ENCODE measurements at regions of chr12 and their contacts with region 1.

Region 1: GRCh38 chr12:93569656-93570551 is 2.6 kb upstream of the SOCS2 start:
- DNase-seq: peak; percentile 89 to 94 (median 94)
- ATAC-seq: peak; percentile 86 to 92
- H3K4me3 ChIP-seq: peak overlapping the region; percentile 93
- H3K27ac ChIP-seq: peak overlapping the region; percentile 79
- H3K4me1 ChIP-seq: no peaks in the 10 kb centered on the region
- H3K27me3 ChIP-seq: no peaks in the 10 kb centered on the region

Region 2: DNA sequence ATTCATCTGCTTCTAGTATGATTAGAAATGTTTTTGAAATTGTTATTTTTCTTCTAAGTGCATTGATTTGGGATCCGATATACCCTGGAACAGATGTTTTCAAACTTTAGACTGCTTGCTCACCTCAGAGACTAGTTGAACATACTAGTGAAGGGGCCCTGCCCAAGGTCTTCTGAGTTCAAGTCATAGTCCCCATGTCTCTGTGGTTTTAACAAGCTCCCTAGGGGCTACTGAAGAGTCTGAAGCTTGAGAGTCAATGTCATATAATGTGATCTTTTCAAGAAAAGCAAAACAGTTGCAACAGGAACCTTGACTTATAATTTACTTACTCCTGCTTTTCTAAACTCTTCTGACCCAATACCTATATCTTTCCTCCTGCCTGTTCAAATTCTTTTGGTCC is 120.6 kb before region 1 on chr12:
- intact Hi-C with region 1: no loop called
- DNase-seq: no peak
- ATAC-seq: no peak
- H3K4me3 ChIP-seq: no peak overlapping the region
- H3K27ac ChIP-seq: no peak overlapping the region
- H3K4me1 ChIP-seq: no peaks in the 10 kb centered on the region
- H3K27me3 ChIP-seq: no peaks in the 10 kb centered on the region

Region 3: GRCh38 chr12:93502802-93503623 is 66.9 kb before region 1 on chr12:
- intact Hi-C with region 1: loop called in 2 of 4 experiments (anchors 5 to 10 kb)
- DNase-seq: peak in 1 of 3 donors; percentile 30
- ATAC-seq: no peak
- H3K4me3 ChIP-seq: no peak overlapping the region
- H3K27ac ChIP-seq: no peak overlapping the region
- H3K4me1 ChIP-seq: no peaks in the 10 kb centered on the region
- H3K27me3 ChIP-seq: no peaks in the 10 kb centered on the region

Region 4: GRCh38 chr12:93733358-93733757 is 163.5 kb after region 1 on chr12:
- intact Hi-C with region 1: loop called in 1 of 4 experiments (anchors 5 kb)
- DNase-seq: no peak
- ATAC-seq: peak; percentile 25 to 29
- H3K4me3 ChIP-seq: no peak overlapping the region
- H3K27ac ChIP-seq: no peak overlapping the region
- H3K4me1 ChIP-seq: peaks cover 3% of the 10 kb centered on the region
- H3K27me3 ChIP-seq: no peaks in the 10 kb centered on the region

Region 5: GRCh38 chr12:93894391-93895088 is 324.6 kb after region 1 on chr12:
- intact Hi-C with region 1: loop called in 1 of 4 experiments (anchors 10 kb)
- DNase-seq: peak; percentile 93 to 97 (median 96)
- ATAC-seq: peak; percentile 96 to 97
- H3K4me3 ChIP-seq: peak overlapping the region; percentile 6
- H3K27ac ChIP-seq: peak overlapping the region; percentile 96
- H3K4me1 ChIP-seq: peaks cover 11% of the 10 kb centered on the region
- H3K27me3 ChIP-seq: no peaks in the 10 kb centered on the region

Region 6: DNA sequence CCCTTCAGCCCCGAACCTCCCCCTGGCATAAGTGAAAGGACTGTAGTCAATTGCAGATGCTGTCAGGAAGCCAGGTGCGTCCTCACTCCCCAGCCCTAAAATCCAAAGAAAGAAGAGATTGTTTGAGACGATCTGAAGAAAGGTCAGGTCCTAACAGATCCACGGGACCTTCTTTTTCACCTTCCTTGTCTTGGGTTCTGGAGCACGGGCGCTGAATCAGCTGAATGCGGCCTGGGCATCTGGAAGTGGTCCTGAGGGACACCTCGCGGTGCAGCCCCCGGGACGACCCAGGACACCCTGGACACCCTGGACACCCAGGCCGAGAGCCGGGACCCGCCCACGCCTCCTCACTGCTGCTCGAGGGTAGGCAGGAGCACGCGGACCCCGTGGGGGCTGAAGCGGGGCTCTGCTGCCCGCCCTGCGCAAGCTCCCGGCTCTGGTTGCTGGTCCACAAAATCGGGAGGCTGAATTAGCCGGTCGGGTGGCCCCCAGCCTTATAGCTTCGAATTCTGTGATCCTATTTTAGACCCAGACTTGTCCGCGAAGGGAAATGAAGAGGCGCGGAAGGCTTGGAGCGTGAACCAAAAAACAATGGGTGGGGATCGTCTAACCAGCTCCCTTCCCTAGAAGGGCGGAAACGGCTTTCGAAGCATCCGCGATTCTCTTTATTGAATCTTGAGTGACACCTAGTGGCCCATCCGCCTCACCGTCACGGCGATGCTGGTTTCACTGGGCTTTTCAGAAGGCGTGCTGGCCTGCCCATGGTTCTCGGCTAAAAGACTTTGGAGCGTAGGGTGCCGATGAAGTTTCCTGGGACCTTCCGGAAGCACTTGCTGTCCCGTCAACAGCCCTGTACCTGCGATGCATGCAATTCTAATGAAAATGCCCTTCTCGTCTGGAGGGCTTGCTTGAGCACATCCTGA is 532.1 kb after region 1 on chr12:
- intact Hi-C with region 1: loop called (anchors 2 to 5 kb)
- DNase-seq: peak; percentile 87 to 95 (median 91)
- ATAC-seq: peak; percentile 91
- H3K4me3 ChIP-seq: peak overlapping the region; percentile 50
- H3K27ac ChIP-seq: no peak overlapping the region
- H3K4me1 ChIP-seq: peaks cover 3% of the 10 kb centered on the region
- H3K27me3 ChIP-seq: no peaks in the 10 kb centered on the region

Region 7: DNA sequence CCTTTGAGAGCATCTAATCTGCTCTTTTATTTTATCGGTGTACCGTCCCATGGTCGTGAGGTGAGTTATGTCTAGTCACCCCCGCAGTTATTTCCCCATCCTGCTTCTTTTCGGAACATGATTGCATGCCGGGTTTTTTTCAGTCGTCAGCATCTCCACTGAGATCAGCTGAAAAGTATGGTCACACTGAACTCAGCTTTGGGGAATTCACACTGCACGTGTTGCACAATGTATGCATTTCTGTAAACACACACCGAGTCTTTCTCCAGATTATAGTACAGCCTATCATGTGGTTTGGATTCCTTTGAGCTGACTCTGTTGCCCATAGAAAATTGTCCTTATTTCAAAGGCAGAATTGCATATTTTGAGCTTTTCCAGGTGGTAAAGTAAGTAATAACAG is 603.1 kb after region 1 on chr12:
- intact Hi-C with region 1: no loop called
- DNase-seq: no peak
- ATAC-seq: no peak
- H3K4me3 ChIP-seq: no peak overlapping the region
- H3K27ac ChIP-seq: no peak overlapping the region
- H3K4me1 ChIP-seq: peaks cover 2% of the 10 kb centered on the region
- H3K27me3 ChIP-seq: no peaks in the 10 kb centered on the region